ENCODE measurements at regions of chr1 and their contacts with region 1.

Region 1: DNA sequence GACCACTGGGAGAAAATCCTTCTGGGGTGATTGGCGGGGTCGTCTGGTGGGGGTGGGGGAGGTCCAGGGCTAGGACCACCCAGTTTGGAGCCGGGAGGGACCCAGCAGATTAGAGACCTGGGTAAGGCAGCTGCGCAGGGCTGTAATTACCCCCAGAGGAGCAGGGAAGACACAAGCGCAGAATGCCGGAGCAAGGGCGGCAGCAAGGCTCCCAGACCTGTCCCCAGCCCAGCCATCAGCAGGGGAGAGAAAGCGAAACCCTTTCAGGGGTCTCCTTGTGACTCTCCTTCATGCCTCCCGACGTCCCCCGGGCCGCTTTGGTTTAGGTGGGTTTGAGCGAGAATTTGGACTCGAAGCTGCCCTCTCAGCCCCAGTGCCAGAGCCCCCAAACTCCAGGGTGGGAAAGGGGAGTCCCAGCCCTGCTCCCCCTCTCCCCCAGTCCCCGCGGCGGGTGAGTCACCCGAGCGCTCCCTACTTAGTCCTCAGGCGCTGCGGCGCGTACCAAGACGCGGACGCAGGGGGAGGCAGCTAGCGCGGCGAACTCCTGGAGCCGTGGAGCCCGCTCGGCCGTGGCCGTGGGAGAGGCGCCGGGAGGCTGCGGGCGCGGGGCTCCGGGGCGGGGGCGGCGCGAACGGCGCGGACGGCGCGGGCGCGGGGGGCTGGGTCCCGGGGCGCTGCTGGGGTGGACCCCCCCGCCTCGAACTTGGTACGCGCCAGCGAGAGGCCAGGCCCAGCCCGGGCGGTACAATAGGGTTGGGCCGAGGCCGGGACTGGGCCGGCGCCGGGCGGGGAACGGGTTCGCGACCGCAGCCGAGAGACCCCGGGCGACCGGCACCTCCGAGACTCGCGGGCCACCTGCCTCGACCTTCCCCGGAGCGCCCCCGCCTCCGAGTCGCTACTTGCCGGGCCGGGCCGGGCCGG is at the start of gene MAP7D1:
- DNase-seq: peak; percentile 88 to 94 (median 89)
- H3K4me3 ChIP-seq: peak within 1 kb of the TSS; percentile 91 to 97
- H3K4me3 Mint-ChIP-seq: peak within 1 kb of the TSS; percentile 85 to 97 (median 92)
- H3K27ac ChIP-seq: peak within 1 kb of the TSS; percentile 96
- H3K27ac Mint-ChIP-seq: peak within 1 kb of the TSS; percentile 91 to 98 (median 94)
- H3K4me1 ChIP-seq: peaks cover 75% of the 10 kb centered on the region
- H3K4me1 Mint-ChIP-seq: peaks cover 47 to 86% (median 65%) of the 10 kb centered on the region in 4 donors
- H3K27me3 ChIP-seq: no peaks in the 10 kb centered on the region
- H3K27me3 Mint-ChIP-seq: no peaks in the 10 kb centered on the region
- total RNA-seq, gene MAP7D1: 221 to 222 TPM

Region 2: DNA sequence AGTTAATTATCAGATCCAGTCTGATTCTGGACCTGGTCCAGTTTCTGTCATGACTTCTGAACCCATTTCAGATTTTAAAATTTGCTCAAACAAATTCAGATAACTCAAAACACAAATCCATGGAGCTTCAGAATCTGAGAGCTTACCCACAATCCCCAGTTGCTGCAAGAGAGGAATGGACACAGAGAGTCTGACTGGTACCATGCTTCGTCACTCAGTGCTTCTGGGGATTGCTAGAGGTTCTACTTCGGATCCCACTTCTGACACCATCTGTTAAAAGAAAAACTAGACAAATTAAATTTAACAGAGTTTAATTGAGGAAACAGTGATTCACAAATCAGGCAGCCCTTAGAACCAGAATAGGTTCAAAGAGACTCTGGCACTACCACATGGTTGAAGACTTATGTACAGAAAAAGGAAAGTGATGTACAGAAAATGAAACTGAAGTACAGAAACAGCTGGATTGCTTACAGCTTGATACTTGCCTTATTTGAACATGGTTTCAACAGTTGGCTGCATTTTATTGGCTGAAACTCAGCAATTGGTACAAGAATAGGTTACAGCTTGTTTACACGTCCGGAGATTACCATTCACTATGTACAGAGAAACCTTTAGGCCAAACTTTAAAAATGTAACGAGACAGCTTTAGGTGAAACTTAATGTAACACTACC is 132.4 kb before region 1 on chr1:
- CTCF ChIA-PET with region 1: no interaction called
- POLR2A ChIA-PET with region 1: no interaction called
- intact Hi-C with region 1: no loop called
- DNase-seq: no peak
- H3K4me3 ChIP-seq: no peak overlapping the region
- H3K4me3 Mint-ChIP-seq: no peak overlapping the region
- H3K27ac ChIP-seq: no peak overlapping the region
- H3K27ac Mint-ChIP-seq: peak overlapping the region in 3 of 7 donors; percentile 16 to 88 (median 32)
- H3K4me1 ChIP-seq: no peaks in the 10 kb centered on the region
- H3K4me1 Mint-ChIP-seq: no peaks in the 10 kb centered on the region
- H3K27me3 ChIP-seq: no peaks in the 10 kb centered on the region
- H3K27me3 Mint-ChIP-seq: no peaks in the 10 kb centered on the region

Region 3: DNA sequence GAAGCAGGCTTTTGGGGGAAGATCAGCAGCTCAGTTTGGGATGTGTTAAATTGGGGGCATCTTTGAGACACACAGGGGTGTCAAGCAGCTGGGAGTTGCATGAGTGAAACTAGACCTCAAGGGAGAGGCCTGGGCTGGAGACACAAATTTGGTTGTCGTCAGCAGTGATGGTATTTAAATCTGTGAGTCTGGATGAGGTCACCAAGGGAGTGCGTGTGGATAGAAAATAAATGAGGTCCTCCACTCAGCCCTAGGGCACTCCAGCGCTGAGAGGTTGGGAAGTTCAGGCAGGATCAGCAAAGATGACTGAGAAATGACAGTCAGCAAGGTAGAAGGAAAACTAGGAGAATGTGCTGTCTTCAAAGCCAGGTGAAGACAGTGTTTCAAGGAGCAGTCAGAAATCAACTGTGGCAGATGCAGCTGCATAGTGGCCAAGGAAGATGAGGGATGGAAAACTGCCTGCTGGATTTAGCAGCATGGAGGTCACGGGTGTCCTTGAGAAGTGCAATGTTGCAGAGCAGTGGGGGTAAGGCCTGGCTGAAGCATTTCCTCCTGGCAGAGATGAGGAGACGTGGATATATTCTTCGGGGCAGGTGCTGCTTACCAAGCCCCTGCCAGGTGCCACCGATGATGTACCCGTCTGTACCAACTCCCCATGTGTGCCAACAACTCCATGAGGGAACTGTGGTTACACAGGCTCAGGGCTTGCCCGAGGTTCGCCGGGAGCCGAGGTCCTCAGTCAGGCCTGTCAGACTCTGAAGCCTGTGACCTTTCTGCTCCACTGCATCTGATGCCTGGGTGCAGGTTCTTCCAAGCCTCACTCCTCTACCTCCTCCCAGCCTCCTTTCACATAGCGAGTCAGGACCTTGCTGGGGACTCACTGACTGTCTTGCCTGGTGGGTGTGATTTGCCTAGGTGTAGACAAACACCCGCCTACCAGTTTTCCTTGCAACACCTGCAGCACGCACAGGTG is 11.6 kb after region 1 on chr1:
- CTCF ChIA-PET with region 1: interaction called, 40 read pairs
- POLR2A ChIA-PET with region 1: interaction called, 251 read pairs
- intact Hi-C with region 1: no loop called
- DNase-seq: no peak
- H3K4me3 ChIP-seq: no peak overlapping the region
- H3K4me3 Mint-ChIP-seq: peak overlapping the region in 1 of 8 donors; percentile 4
- H3K27ac ChIP-seq: no peak overlapping the region
- H3K27ac Mint-ChIP-seq: peak overlapping the region; percentile 50 to 90 (median 87)
- H3K4me1 ChIP-seq: peaks cover 42% of the 10 kb centered on the region
- H3K4me1 Mint-ChIP-seq: peaks cover 39 to 66% (median 50%) of the 10 kb centered on the region in 4 donors
- H3K27me3 ChIP-seq: no peaks in the 10 kb centered on the region
- H3K27me3 Mint-ChIP-seq: no peaks in the 10 kb centered on the region

Region 4: GRCh38 chr1:36436817-36437216 is 281.1 kb after region 1 on chr1:
- CTCF ChIA-PET with region 1: no interaction called
- POLR2A ChIA-PET with region 1: no interaction called
- intact Hi-C with region 1: no loop called
- DNase-seq: no peak
- H3K4me3 ChIP-seq: no peak overlapping the region
- H3K4me3 Mint-ChIP-seq: no peak overlapping the region
- H3K27ac ChIP-seq: no peak overlapping the region
- H3K27ac Mint-ChIP-seq: no peak overlapping the region
- H3K4me1 ChIP-seq: no peaks in the 10 kb centered on the region
- H3K4me1 Mint-ChIP-seq: no peaks in the 10 kb centered on the region
- H3K27me3 ChIP-seq: no peaks in the 10 kb centered on the region
- H3K27me3 Mint-ChIP-seq: no peaks in the 10 kb centered on the region